ENCODE measurements at regions of chr3 and their contacts with region 1.

Region 1: DNA sequence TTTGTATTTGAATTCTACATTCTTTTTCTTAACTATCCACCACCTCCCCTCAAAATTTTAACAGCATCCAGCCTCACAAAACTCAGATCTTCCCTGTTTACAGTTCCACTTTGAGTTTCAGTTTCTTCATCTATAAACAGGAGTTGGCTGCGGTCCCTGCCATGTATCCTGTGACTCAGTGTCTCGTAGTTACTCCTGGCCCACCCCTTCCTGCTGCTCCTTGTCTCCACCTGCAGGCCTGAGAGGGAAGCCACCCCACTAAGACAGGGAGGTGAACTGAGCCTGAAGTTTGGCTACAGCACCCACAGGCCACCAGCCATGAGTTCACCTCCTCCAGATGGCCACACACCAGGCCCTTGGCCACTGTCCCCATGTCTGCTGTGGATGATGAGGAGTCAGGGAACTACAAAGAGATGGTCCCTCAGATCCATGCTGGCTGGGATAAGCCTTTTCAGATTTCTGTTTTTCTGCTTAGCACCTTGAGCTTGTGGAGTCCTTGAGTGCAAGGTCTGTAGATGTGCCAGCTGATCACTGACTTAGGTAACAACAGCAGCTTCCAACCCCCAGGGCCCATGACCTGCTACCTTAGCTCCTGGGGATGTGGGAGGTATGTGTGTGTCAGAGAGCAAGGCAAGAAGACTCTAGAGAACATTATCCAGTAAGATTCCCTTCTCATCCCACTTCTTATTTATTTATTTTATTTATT is 37.5 kb downstream of the CD86 start:
- DNase-seq: peak; percentile 91
- ATAC-seq: peak; percentile 89
- H3K4me3 Mint-ChIP-seq: peak overlapping the region; percentile 51
- H3K27ac Mint-ChIP-seq: peak overlapping the region; percentile 96
- H3K4me1 Mint-ChIP-seq: peaks cover 66% of the 10 kb centered on the region
- H3K27me3 Mint-ChIP-seq: no peaks in the 10 kb centered on the region

Region 2: GRCh38 chr3:121883507-121883906 is 209.1 kb before region 1 on chr3:
- CTCF ChIA-PET with region 1: interaction called, 12 read pairs
- DNase-seq: no peak
- ATAC-seq: peak; percentile 58
- H3K4me3 Mint-ChIP-seq: no peak overlapping the region
- H3K27ac Mint-ChIP-seq: no peak overlapping the region
- H3K4me1 Mint-ChIP-seq: peaks cover 8% of the 10 kb centered on the region
- H3K27me3 Mint-ChIP-seq: no peaks in the 10 kb centered on the region

Region 3: GRCh38 chr3:122074621-122075265 is 17.9 kb before region 1 on chr3:
- CTCF ChIA-PET with region 1: interaction called, 121 read pairs
- DNase-seq: peak; percentile 93
- ATAC-seq: peak; percentile 73
- H3K4me3 Mint-ChIP-seq: peak overlapping the region; percentile 82
- H3K27ac Mint-ChIP-seq: peak overlapping the region; percentile 99
- H3K4me1 Mint-ChIP-seq: peaks cover 68% of the 10 kb centered on the region
- H3K27me3 Mint-ChIP-seq: no peaks in the 10 kb centered on the region

Region 4: DNA sequence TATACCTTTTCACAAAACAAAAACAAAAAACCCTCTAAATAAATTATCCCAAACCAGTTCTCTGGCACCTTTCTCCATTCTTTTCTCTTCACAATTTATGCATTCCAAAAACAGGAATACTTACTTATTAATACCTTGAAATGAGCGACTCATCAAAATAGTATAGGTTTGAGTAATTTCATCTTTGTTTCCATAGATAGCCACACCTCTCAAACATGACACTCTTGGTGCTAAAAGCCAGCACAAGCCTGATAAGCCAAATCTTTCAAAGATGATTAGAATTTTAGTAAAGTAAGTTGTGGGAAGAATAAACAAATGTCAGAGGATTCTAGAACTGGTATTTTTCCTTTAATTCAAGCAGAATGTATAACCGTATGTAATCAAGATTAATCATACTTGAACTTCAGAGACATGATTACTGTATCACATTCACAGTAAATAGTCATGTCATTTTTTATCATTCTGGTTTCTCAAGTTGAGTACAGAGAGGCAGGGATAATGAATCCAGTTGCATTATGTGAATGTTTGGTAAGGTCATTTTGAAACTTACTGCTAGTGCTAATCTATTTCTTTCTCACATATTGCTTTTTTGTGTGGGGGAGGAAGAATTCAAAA is 335.4 kb after region 1 on chr3:
- CTCF ChIA-PET with region 1: no interaction called
- DNase-seq: no peak
- ATAC-seq: peak; percentile 68
- H3K4me3 Mint-ChIP-seq: no peak overlapping the region
- H3K27ac Mint-ChIP-seq: peak overlapping the region; percentile 60
- H3K4me1 Mint-ChIP-seq: peaks cover 28% of the 10 kb centered on the region
- H3K27me3 Mint-ChIP-seq: no peaks in the 10 kb centered on the region